GM10248 (cell line): ENCODE measurements at regions of chr16 and their contacts with region 1.

Region 1: GRCh38 chr16:740764-741505 is at the start of gene CIAO3:
- DNase-seq: peak; percentile 95
- CTCF ChIP-seq: peak; percentile 96

Region 2: DNA sequence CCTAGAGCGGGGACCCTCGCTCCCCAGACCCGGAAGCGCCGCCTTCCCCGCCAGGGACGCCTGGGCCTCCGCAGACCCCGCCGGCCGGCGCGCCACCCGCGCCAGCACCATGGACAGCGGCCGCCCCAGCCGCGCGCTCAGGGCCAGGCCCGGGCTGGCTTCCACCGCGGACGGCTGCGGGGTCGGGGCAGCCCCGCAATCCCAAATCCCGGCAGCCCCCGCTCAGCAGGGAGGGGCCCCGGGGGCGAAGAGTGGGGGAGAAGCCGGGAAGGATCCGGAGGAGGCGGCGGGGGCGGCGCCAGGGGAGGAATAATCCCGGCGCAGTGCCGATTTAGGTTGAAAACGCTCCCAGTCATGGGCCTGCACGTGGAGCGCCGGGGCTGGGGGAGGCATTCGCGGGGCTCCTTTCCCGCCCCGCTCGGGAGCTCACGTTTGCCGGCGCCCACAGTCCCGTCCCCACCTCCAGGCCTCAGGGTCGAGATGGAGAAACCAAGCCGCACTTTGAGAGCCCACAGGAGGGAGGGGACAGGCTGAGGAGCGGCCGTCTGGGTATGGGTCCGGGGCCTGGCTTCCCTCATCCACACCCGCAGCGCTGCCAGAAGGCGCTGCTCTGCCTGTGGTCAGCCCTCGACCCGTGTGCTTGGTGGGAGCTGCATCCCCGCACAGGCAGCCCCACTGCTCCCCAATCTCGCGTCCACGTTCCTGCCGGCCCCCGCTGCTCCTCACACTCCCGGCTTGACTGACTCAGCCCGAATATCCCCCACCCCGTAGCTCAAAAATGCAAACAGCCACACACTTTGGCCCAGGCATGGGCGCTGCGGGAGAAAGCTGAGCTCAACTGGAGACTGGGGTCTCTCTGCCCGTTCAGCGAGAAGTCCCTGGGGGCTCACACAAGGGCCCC is 40.0 kb before region 1 on chr16:
- CTCF ChIA-PET with region 1: no interaction called
- POLR2A ChIA-PET with region 1: no interaction called
- DNase-seq: peak; percentile 54
- CTCF ChIP-seq: no peak

Region 3: GRCh38 chr16:720990-721764 is 19.8 kb before region 1 on chr16 and contains the start of gene ANTKMT:
- CTCF ChIA-PET with region 1: interaction called, 31 read pairs
- POLR2A ChIA-PET with region 1: no interaction called
- DNase-seq: peak; percentile 91
- CTCF ChIP-seq: no peak

Region 4: GRCh38 chr16:788394-789126 is 47.6 kb after region 1 on chr16 and contains the start of gene CHTF18:
- CTCF ChIA-PET with region 1: interaction called, 10 read pairs
- POLR2A ChIA-PET with region 1: no interaction called
- DNase-seq: peak; percentile 100
- CTCF ChIP-seq: no peak